MCF 10A (cell line): ENCODE measurements at regions of chr1 and their contacts with region 1.

Region 1: GRCh38 chr1:204670152-204670927 is 15.2 kb downstream of the LRRN2 start:
- DNase-seq: peak; percentile 60
- H3K4me3 Mint-ChIP-seq: no peak overlapping the region
- H3K27ac Mint-ChIP-seq: no peak overlapping the region
- H3K4me1 Mint-ChIP-seq: no peaks in the 10 kb centered on the region
- H3K27me3 Mint-ChIP-seq: peaks cover 1% of the 10 kb centered on the region
- CTCF ChIP-seq: no peak

Region 2: DNA sequence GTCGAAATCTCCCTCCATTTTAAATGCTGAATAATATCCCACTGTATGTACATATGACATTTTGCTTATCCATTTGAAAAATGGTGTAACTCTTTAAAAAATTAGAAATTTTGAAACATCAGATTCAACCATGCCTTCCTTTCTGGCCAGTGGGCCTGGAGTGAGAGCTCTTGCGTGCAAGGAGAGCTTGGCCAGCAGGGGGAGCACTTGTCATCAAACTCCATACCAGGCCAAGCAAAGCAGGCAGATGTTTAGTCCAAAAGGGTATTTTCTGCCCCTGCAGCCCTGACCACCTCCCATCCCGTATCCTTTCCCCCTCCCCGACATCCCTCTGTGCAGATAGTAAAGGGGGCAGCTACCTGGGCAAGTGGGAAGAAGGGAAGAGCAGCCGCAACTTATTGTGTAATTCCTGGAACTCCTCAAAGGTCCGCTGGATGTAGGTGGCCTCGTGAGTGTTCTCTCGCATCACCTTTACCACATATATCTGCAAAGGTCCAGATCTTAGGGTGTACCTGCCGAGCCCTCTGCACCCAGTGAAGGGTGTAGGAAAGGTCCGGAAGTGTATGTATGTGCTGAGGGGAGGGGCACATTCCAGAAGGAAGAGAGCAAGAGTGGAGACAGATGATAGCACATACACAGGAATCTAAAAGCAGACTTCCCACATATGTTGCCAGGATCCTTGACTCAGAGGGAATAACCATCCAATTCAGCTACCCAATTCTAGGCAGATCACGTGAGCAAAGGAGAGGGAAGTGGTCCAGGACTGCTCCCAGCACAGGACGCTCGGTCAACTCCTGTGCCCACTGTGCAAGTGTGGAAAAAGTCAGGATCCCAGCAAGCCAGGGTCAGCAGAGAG is 238.8 kb before region 1 on chr1:
- CTCF ChIA-PET with region 1: no interaction called
- POLR2A ChIA-PET with region 1: no interaction called
- intact Hi-C with region 1: no loop called
- DNase-seq: peak; percentile 88
- H3K4me3 Mint-ChIP-seq: no peak overlapping the region
- H3K27ac Mint-ChIP-seq: no peak overlapping the region
- H3K4me1 Mint-ChIP-seq: peaks cover 39% of the 10 kb centered on the region
- H3K27me3 Mint-ChIP-seq: no peaks in the 10 kb centered on the region
- CTCF ChIP-seq: peak; percentile 99

Region 3: GRCh38 chr1:204647114-204647804 is 23.1 kb before region 1 on chr1:
- CTCF ChIA-PET with region 1: no interaction called
- POLR2A ChIA-PET with region 1: no interaction called
- intact Hi-C with region 1: no loop called
- DNase-seq: peak; percentile 88
- H3K4me3 Mint-ChIP-seq: no peak overlapping the region
- H3K27ac Mint-ChIP-seq: no peak overlapping the region
- H3K4me1 Mint-ChIP-seq: peaks cover 8% of the 10 kb centered on the region
- H3K27me3 Mint-ChIP-seq: peaks cover 46% of the 10 kb centered on the region
- CTCF ChIP-seq: no peak

Region 4: DNA sequence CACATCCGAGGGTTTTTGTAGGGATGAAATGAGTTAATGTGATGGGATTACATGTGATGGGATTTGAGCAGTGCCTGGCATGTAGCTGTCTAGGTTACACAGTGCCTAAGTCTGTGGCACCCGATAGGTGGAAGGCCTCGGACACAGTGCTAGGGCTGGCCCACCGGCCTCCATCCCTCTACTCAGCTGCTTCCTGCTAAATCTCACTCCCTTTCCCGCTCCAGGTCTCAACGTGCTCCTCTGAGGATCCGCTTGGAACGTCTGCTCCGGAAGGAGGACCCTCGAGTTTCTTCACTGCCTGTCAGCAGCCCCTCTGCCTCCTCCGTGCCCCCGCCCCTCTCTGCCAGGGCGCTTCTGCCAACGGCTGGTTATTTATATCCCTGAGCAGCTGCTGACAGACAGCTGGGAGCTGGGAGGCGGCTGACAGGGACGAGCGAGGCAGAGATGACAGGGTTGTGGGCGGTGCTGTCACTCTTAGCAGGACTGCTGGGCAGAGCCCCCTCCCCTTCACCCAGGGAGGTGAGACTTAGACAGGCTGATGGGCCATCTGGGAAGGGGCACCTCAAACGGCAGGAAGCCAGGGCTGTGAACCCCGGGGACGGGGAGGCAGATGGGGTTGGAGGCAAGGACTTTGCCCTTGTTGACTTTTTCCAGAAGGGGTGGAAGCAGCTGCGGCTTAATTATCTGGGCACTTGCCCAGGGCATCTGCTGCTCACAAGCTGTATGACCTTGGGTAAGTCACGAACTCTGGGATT is 41.8 kb after region 1 on chr1:
- CTCF ChIA-PET with region 1: no interaction called
- POLR2A ChIA-PET with region 1: no interaction called
- intact Hi-C with region 1: loop called (anchors 1 kb)
- DNase-seq: no peak
- H3K4me3 Mint-ChIP-seq: no peak overlapping the region
- H3K27ac Mint-ChIP-seq: no peak overlapping the region
- H3K4me1 Mint-ChIP-seq: peaks cover 19% of the 10 kb centered on the region
- H3K27me3 Mint-ChIP-seq: peaks cover 31% of the 10 kb centered on the region
- CTCF ChIP-seq: no peak